ENCODE measurements at regions of chr7 and their contacts with region 1.

Region 1: DNA sequence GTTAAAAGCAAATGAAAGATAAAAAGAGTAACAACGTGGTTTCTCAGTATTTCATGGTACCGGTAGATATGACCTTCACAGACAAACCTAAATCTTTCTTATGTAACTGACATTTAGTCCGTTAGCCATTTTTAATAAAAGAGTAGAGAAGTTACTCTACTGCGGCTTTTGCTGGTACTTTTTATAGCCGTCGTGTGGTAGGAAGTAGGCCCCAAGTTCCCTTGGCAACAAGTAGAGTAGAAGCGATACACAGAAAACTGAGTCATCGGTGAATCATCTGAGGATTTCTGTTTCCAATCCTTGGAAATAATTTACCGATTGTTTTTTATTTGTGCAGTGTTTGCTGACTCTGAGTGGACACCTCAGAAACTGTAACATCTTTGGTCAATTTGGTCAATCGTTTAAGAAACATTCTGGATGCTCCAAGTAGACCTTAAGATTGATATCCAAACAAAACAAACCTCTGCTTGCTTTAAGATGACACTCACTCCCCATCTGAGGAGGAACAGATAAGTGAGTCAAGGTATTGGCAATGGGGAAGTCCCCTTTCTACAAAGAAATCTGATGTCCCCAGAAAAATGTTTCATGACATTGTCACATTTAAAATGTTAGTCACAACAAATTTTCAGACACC is 63.9 kb upstream of the AHR start:
- DNase-seq: peak; percentile 68
- H3K4me3 Mint-ChIP-seq: peak overlapping the region; percentile 82
- H3K27ac Mint-ChIP-seq: peak overlapping the region; percentile 97
- H3K4me1 Mint-ChIP-seq: peaks cover 63% of the 10 kb centered on the region
- H3K27me3 Mint-ChIP-seq: peaks cover 5% of the 10 kb centered on the region

Region 2: GRCh38 chr7:16926283-16926682 is 308.2 kb before region 1 on chr7:
- intact Hi-C with region 1: loop called (anchors 5 kb)
- DNase-seq: no peak
- H3K4me3 Mint-ChIP-seq: no peak overlapping the region
- H3K27ac Mint-ChIP-seq: no peak overlapping the region
- H3K4me1 Mint-ChIP-seq: peaks cover 49% of the 10 kb centered on the region
- H3K27me3 Mint-ChIP-seq: no peaks in the 10 kb centered on the region

Region 3: GRCh38 chr7:17009007-17009719 is 225.4 kb before region 1 on chr7:
- intact Hi-C with region 1: loop called (anchors 2 kb)
- DNase-seq: no peak
- H3K4me3 Mint-ChIP-seq: no peak overlapping the region
- H3K27ac Mint-ChIP-seq: no peak overlapping the region
- H3K4me1 Mint-ChIP-seq: peaks cover 18% of the 10 kb centered on the region
- H3K27me3 Mint-ChIP-seq: peaks cover 14% of the 10 kb centered on the region

Region 4: DNA sequence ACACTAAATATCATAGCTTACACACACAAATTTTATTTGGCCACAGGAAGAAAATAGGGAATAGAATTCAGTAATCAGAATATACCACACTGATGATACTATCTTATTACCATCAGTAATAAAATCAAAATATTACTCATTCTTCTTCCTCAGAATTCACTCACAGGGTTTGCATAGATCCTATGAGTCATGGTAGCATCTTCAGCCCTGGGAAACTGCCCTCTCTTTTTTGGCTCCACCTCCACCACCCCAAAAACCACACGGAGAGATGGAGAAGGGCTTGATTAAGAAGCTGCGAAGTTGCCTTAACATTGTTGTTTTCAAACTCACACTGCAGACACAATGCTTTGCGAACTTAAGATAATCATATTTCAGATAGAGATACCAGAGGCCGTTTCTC is 90.2 kb before region 1 on chr7:
- intact Hi-C with region 1: loop called (anchors 1 kb)
- DNase-seq: peak; percentile 49
- H3K4me3 Mint-ChIP-seq: peak overlapping the region; percentile 1
- H3K27ac Mint-ChIP-seq: peak overlapping the region; percentile 25
- H3K4me1 Mint-ChIP-seq: peaks cover 46% of the 10 kb centered on the region
- H3K27me3 Mint-ChIP-seq: no peaks in the 10 kb centered on the region

Region 5: GRCh38 chr7:17205910-17206905 is 28.3 kb before region 1 on chr7:
- intact Hi-C with region 1: no loop called
- DNase-seq: no peak
- H3K4me3 Mint-ChIP-seq: no peak overlapping the region
- H3K27ac Mint-ChIP-seq: no peak overlapping the region
- H3K4me1 Mint-ChIP-seq: no peaks in the 10 kb centered on the region
- H3K27me3 Mint-ChIP-seq: no peaks in the 10 kb centered on the region

Region 6: DNA sequence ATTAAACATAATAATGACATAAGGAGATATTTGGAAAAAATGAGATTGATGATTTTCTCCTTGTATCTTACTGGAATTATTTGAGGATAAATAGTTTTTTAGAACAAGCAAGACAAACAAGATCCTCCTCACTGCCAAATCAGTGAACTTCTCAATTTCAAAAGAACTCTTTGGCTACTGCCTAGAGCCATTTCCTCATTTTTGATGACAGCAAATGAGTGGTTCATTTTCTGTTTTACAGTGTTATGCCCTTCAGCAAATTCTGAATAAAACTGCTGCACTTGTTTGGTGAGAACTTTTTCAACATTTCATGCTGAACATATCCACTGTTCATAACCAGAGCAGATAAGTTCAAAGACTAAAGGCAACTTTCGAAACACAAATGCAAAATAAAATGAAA is 21.4 kb after region 1 on chr7:
- intact Hi-C with region 1: loop called (anchors 1 kb)
- DNase-seq: no peak
- H3K4me3 Mint-ChIP-seq: no peak overlapping the region
- H3K27ac Mint-ChIP-seq: no peak overlapping the region
- H3K4me1 Mint-ChIP-seq: peaks cover 12% of the 10 kb centered on the region
- H3K27me3 Mint-ChIP-seq: no peaks in the 10 kb centered on the region

Region 7: GRCh38 chr7:17304926-17305325 is 70.4 kb after region 1 on chr7:
- intact Hi-C with region 1: loop called (anchors 1 kb)
- DNase-seq: no peak
- H3K4me3 Mint-ChIP-seq: peak overlapping the region; percentile 11
- H3K27ac Mint-ChIP-seq: peak overlapping the region; percentile 26
- H3K4me1 Mint-ChIP-seq: peaks cover 18% of the 10 kb centered on the region
- H3K27me3 Mint-ChIP-seq: no peaks in the 10 kb centered on the region

Measured in activated T-helper 1 cell treated with anti-CD3 and anti-CD28 coated beads, Interleukin-12 subunit alpha, Interleukin-12 subunit beta, Interleukin-2, Interleukin-4 antibody, amounts not matched to agents 30 ng/mL and 10 ng/mL and 1 ng/mL, durations not matched to agents 14 hours and 24 hours and 36 hours (primary cell).